ENCODE measurements at regions of chr3 and their contacts with region 1.

Region 1: DNA sequence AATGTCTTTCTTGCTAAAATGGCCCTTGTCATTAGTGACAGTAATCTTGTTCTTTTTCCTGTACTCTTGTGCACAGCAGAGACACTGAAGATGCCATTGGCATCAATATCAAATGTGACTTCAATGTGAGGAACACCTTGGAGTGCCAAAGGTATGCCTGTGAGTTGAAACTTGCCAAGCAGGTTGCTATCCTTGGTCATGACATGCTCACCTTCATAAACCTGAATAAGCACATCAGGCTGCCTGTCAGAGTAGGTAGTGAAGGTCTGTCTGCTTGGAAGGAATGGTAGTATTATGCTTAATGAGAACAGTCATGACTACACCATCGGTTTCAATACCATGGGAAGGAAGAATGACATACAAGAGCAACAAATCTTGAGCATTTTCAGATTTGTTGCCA is 6.3 kb upstream of the RAB5A start:
- DNase-seq: no peak
- H3K4me3 ChIP-seq: no peak overlapping the region
- H3K27ac ChIP-seq: no peak overlapping the region
- H3K4me1 ChIP-seq: peaks cover 2% of the 10 kb centered on the region
- H3K27me3 ChIP-seq: no peaks in the 10 kb centered on the region
- CTCF ChIP-seq: no peak

Region 2: DNA sequence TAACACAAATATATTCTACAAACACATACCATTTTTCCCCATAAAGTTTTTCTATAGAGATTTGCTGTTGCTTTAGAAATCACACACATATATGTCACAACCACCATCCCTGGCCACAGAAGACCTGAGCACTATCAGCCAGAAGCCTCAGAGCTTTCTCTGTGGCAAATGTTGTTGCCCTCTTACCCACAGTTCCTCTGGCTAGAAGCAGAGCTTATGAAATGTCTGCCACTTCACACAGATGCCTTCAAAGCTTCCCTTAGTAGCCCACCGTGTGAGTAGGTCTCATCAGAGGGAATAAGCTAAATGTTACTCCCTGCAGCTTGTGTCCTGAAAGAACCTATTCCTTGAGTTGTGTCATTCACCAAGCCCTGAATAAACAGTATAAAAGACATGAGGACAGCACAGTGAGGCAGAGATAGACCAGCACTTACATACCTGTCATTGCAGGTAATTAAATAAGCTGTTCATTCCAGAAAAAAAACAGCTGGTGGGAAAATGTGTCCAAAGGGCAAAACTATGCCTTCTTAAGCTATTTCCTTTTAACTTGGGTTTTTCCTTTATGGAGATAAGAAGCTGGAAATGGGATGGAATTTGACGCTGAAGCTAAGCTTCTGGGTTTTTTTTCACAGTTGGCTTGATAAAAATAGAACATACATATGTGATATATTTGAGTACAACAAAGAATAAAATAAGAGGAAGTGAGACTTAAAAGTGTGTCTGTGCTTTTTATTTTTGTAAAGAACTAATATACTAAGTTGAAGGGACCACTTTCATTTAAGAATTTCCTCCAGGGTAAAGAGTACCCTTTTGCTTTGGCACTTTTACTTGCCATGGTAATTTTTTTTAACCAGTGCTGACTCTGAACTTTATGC is 400.9 kb before region 1 on chr3:
- CTCF ChIA-PET with region 1: no interaction called
- dilution Hi-C with region 1: no loop called
- in situ Hi-C with region 1: no loop called
- intact Hi-C with region 1: no loop called
- DNase-seq: no peak
- H3K4me3 ChIP-seq: no peak overlapping the region
- H3K27ac ChIP-seq: no peak overlapping the region
- H3K4me1 ChIP-seq: no peaks in the 10 kb centered on the region
- H3K27me3 ChIP-seq: no peaks in the 10 kb centered on the region
- CTCF ChIP-seq: no peak

Region 3: GRCh38 chr3:19901918-19902317 is 38.7 kb before region 1 on chr3:
- CTCF ChIA-PET with region 1: interaction called, 18 read pairs
- dilution Hi-C with region 1: loop called (anchors 5 kb)
- in situ Hi-C with region 1: no loop called
- intact Hi-C with region 1: no loop called
- DNase-seq: peak; percentile 85
- H3K4me3 ChIP-seq: no peak overlapping the region
- H3K27ac ChIP-seq: no peak overlapping the region
- H3K4me1 ChIP-seq: peaks cover 5% of the 10 kb centered on the region
- H3K27me3 ChIP-seq: no peaks in the 10 kb centered on the region
- CTCF ChIP-seq: no peak